K562 (cell line): ENCODE measurements at regions of chr14 and their contacts with region 1.

Region 1: DNA sequence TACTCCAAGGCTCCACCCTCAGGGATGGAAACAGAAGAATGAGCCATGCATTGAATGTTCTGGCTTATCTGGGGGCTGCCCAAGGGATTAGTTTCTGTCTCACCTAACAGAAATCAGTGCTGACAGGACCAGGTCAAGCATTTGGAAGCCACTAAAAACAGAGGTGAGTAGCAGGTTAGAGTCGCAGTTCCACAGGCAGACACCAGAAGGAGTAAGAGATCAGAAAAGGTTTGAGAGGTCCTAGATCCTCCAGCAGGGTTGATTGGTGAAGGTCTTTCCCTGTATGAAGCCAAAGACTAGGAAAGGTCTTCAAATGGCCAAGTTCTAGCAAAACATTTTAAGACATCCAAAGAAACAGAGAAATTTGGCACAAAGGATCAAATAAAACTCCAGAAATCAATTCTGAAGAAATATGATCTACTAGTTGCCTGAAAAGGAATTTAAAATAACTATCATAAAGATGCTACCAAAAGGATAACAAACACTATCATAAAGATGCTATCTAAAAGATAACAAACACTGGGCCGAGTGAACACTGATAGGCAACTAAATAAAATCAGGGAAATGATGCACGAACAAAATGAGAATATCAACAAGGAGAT is 19.5 kb upstream of the TTC9 start:
- DNase-seq: peak in 2 of 4 experiments; percentile 19 to 20
- ATAC-seq: peak; percentile 58; the same call in 1 of the 3 replicates
- H3K4me3 ChIP-seq: no peak overlapping the region
- H3K27ac ChIP-seq: no peak overlapping the region
- H3K4me1 ChIP-seq: no peaks in the 10 kb centered on the region
- H3K27me3 ChIP-seq: no peaks in the 10 kb centered on the region
- CTCF ChIP-seq: peak; percentile 37 to 59 (median 55); a peak in 5 of 6 replicates
- EP300 ChIP-seq: no peak
- POLR2A ChIP-seq: no peak
- RAD21 ChIP-seq: peak; percentile 59 to 64

Region 2: DNA sequence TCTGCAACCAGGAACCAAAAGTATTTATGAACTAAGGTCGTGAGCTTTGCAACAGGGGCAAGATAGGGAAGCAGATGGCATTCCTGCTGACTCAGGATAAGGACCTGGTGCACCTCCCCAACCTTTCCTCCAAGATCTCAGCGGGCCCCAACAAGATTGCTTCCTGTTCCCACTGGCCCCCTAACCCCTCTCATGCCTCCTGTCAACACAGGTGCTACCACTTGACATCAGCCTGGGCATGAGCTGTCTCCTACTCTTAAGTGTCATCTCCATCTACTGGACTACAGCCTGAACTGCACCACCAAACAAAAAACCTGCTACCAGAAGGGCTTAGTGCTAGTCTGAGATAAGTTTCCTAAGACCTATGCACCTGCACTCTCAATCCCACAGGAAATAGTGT is 54.4 kb before region 1 on chr14:
- CTCF ChIA-PET with region 1: no interaction called
- POLR2A ChIA-PET with region 1: no interaction called
- in situ Hi-C with region 1: no loop called
- intact Hi-C with region 1: no loop called
- DNase-seq: peak; percentile 4 to 10 (median 8)
- ATAC-seq: peak; percentile 67
- H3K4me3 ChIP-seq: no peak overlapping the region
- H3K27ac ChIP-seq: no peak overlapping the region
- H3K4me1 ChIP-seq: no peaks in the 10 kb centered on the region
- H3K27me3 ChIP-seq: no peaks in the 10 kb centered on the region
- CTCF ChIP-seq: peak; percentile 27 to 30 (median 27); a peak in 3 of 6 replicates
- EP300 ChIP-seq: no peak
- POLR2A ChIP-seq: no peak
- RAD21 ChIP-seq: peak in 1 of 2 experiments; percentile 25; a peak in 1 of 4 replicates

Region 3: DNA sequence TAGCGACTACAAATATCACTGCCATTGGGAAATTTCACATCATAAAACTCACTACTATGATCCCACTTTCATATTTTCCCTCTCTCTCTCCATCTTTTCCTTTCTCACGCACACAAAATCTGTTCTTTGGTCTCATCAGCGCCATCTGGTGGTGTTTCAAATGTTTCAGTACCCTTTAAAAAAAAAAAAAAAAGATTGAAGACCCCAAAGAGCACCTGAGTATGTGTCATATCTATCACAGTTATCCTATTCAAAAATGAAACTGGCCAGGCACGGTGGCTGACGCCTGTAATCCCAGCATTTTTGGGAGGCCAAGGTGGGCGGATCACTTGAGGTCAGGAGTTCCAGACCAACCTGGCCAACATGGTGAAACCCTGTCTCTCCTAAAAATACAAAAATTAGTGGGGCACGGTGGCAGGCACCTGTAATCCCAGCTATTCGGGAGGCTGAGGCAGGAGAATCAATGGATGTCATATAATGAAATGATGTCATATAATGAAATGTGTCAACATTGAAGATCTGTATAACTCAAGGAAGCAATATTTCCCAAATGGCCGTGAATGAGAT is 91.9 kb after region 1 on chr14:
- CTCF ChIA-PET with region 1: no interaction called
- POLR2A ChIA-PET with region 1: no interaction called
- in situ Hi-C with region 1: no loop called
- intact Hi-C with region 1: loop called (anchors 10 kb)
- DNase-seq: peak; percentile 19 to 49 (median 20)
- ATAC-seq: no peak
- H3K4me3 ChIP-seq: no peak overlapping the region
- H3K27ac ChIP-seq: no peak overlapping the region
- H3K4me1 ChIP-seq: no peaks in the 10 kb centered on the region
- H3K27me3 ChIP-seq: no peaks in the 10 kb centered on the region; a peak in 1 of 5 replicates
- CTCF ChIP-seq: peak in 2 of 3 experiments; percentile 47 to 48; a peak in 3 of 6 replicates
- EP300 ChIP-seq: no peak
- POLR2A ChIP-seq: no peak
- RAD21 ChIP-seq: peak; percentile 36 to 44

Region 4: DNA sequence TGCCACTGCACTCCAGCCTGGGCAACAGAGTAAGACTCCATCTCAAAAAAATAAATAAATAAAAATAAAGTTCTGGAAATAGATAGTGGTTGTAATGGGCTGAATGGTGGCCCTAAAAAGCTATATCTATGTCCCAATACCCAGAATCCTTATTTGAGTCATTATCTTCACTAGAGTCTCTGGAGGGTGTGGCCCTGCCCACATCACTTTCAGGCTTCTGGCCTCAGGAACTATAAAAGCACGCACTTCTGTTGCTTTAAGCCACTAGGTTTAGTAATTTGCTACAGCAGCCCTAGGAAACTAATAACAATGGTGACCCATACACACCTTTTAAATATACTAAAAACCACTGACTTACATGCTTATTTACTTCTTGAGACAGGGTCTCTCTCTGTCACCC is 137.2 kb after region 1 on chr14:
- CTCF ChIA-PET with region 1: no interaction called
- POLR2A ChIA-PET with region 1: no interaction called
- in situ Hi-C with region 1: no loop called
- intact Hi-C with region 1: no loop called
- DNase-seq: no peak
- ATAC-seq: no peak
- H3K4me3 ChIP-seq: no peak overlapping the region
- H3K27ac ChIP-seq: no peak overlapping the region
- H3K4me1 ChIP-seq: no peaks in the 10 kb centered on the region
- H3K27me3 ChIP-seq: no peaks in the 10 kb centered on the region
- CTCF ChIP-seq: no peak
- EP300 ChIP-seq: no peak
- POLR2A ChIP-seq: no peak
- RAD21 ChIP-seq: no peak

Region 5: DNA sequence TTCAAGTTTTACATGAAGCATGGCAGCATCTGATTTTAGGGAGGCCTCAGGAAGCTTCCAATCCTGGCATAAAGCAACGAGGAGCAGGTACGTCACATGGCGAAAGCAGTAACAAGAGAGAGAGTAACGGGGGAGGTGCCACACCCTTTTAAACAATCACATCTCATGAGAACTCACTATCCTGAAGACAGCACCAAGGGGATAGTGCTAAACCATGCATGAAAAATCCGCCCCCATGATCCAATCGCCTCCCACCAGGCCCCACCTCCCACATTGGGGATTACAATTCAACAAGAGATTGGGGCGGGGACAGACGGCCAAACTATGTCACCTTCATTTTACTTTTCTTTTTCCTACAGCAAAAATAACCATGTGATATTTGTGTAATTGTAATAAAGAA is 194.3 kb after region 1 on chr14:
- CTCF ChIA-PET with region 1: interaction called, 10 read pairs
- POLR2A ChIA-PET with region 1: no interaction called
- in situ Hi-C with region 1: no loop called
- intact Hi-C with region 1: loop called (anchors 1 kb)
- DNase-seq: no peak
- ATAC-seq: no peak
- H3K4me3 ChIP-seq: no peak overlapping the region
- H3K27ac ChIP-seq: no peak overlapping the region
- H3K4me1 ChIP-seq: peaks cover 0 to under 1% of the 10 kb centered on the region in 2 experiments; a peak in 1 of 5 replicates
- H3K27me3 ChIP-seq: peaks cover 0 to 2% of the 10 kb centered on the region in 2 experiments; a peak in 2 of 5 replicates
- CTCF ChIP-seq: no peak
- EP300 ChIP-seq: no peak
- POLR2A ChIP-seq: no peak
- RAD21 ChIP-seq: no peak

Region 6: GRCh38 chr14:70821584-70822529 is 199.6 kb after region 1 on chr14:
- CTCF ChIA-PET with region 1: interaction called, 10 read pairs
- POLR2A ChIA-PET with region 1: no interaction called
- in situ Hi-C with region 1: no loop called
- intact Hi-C with region 1: loop called (anchors 1 kb)
- DNase-seq: peak in 3 of 4 experiments; percentile 14 to 27 (median 27)
- ATAC-seq: peak; percentile 58
- H3K4me3 ChIP-seq: peak overlapping the region; percentile 13; the same call in 1 of the 2 replicates
- H3K27ac ChIP-seq: no peak overlapping the region
- H3K4me1 ChIP-seq: peaks cover 0 to 8% of the 10 kb centered on the region in 2 experiments; a peak in 2 of 5 replicates
- H3K27me3 ChIP-seq: peaks cover 4 to 6% of the 10 kb centered on the region in 2 experiments; a peak in 4 of 5 replicates
- CTCF ChIP-seq: no peak
- EP300 ChIP-seq: no peak
- POLR2A ChIP-seq: no peak
- RAD21 ChIP-seq: no peak

Region 7: GRCh38 chr14:71011479-71011878 is 389.3 kb after region 1 on chr14:
- CTCF ChIA-PET with region 1: no interaction called
- POLR2A ChIA-PET with region 1: no interaction called
- in situ Hi-C with region 1: no loop called
- intact Hi-C with region 1: no loop called
- DNase-seq: no peak
- ATAC-seq: no peak
- H3K4me3 ChIP-seq: no peak overlapping the region
- H3K27ac ChIP-seq: no peak overlapping the region
- H3K4me1 ChIP-seq: no peaks in the 10 kb centered on the region
- H3K27me3 ChIP-seq: no peaks in the 10 kb centered on the region
- CTCF ChIP-seq: no peak
- EP300 ChIP-seq: no peak
- POLR2A ChIP-seq: no peak
- RAD21 ChIP-seq: peak in 1 of 2 experiments; percentile 6; a peak in 1 of 4 replicates